AG04450 (cell line): ENCODE measurements at regions of chr17 and their contacts with region 1.

Region 1: DNA sequence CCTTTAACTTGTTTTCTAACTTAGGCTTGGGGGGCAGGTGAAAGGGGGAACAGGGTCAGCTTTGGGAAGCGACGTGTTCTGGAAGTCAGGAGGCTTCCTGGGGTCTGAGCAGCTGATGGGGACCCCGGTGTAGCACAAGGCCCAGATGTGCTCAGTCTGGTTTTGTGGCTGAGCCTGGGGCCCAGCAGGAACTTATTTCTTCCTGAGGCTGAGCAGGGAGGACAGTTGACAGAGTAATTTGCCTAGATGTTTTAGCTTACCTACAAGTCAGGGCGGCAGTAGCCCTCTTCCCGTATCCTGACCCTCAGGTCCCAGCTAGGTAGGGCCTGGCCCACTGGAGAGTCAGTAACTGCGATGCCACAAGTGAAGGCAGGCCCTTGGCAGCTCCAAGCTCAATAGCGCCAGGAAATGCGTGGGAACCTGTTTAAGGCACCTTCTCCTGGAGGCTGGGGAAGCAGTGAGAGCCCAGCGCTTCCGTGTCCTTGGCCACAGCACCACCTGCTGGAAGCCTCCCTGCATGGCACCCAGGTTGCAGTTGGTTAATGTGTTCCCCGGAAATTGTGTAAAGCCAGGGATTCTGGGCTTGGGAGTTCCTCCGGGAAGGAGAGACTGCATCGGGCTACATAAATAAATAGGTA is 5.2 kb downstream of the CCR7 start:
- DNase-seq: peak; percentile 89
- H3K4me3 ChIP-seq: no peak overlapping the region
- H3K27ac ChIP-seq: peak overlapping the region; percentile 77
- H3K27me3 ChIP-seq: peaks cover 19% of the 10 kb centered on the region
- CTCF ChIP-seq: peak; percentile 99

Region 2: GRCh38 chr17:40362696-40363110 is 197.4 kb before region 1 on chr17:
- CTCF ChIA-PET with region 1: interaction called, 25 read pairs
- POLR2A ChIA-PET with region 1: no interaction called
- DNase-seq: no peak
- H3K4me3 ChIP-seq: peak overlapping the region; percentile 59
- H3K27ac ChIP-seq: no peak overlapping the region
- H3K27me3 ChIP-seq: no peaks in the 10 kb centered on the region
- CTCF ChIP-seq: peak; percentile 70

Region 3: DNA sequence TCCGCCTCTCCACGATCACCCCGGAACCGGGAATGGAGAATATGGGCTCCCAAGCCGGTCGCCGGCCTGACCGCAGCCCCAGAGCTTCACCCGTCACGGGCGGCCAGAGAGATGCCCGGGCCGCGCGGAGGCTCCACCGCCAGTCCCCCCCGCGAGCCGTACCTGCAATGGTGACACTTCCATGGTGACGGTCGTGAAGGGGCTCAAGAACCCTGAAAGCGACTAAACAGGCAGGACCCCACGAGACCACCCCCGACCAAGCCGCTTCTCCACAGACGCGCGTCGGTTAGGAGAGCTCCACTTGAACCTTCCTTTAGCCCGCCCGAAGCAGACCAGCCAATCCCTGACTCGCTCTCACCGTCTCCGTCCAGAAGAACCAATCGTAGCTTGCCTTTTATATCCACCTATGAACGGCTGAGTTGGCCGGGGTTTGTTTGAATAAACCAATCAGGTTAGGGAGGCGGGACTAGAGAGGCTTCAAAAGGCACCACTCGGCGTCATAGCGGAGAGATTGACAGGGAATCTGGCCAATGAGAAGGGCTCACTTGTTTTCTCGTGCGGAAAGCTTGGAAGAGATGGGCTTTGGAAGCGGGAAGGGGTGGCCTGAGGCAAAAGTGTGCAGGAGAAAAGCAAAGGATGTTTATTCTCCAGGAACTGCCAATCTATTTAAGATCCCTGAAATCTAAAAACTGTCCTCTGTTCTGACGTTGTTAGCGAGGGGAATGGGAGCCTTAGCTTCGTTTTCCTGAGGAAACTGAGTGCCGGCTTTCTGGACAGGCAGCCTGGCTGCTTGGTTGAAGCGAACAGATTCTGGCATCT is 142.3 kb before region 1 on chr17 and contains the start of gene TOP2A:
- CTCF ChIA-PET with region 1: interaction called, 37 read pairs
- POLR2A ChIA-PET with region 1: interaction called, 3 read pairs
- DNase-seq: peak; percentile 100
- H3K4me3 ChIP-seq: peak within 1 kb of the TSS; percentile 82
- H3K27ac ChIP-seq: peak within 1 kb of the TSS; percentile 31
- H3K27me3 ChIP-seq: no peaks in the 10 kb centered on the region
- CTCF ChIP-seq: no peak
- polyA plus RNA-seq, gene TOP2A: 28.2 and 53.5 TPM in 2 replicates

Region 4: GRCh38 chr17:40450175-40450574 is 109.9 kb before region 1 on chr17:
- CTCF ChIA-PET with region 1: interaction called, 10 read pairs
- POLR2A ChIA-PET with region 1: interaction called, 4 read pairs
- DNase-seq: no peak
- H3K4me3 ChIP-seq: peak overlapping the region; percentile 22; the same call in 1 of the 2 replicates
- H3K27ac ChIP-seq: peak overlapping the region; percentile 85
- H3K27me3 ChIP-seq: no peaks in the 10 kb centered on the region
- CTCF ChIP-seq: peak; percentile 57

Region 5: GRCh38 chr17:40516581-40517285 is 43.3 kb before region 1 on chr17:
- CTCF ChIA-PET with region 1: no interaction called
- POLR2A ChIA-PET with region 1: no interaction called
- DNase-seq: no peak
- H3K4me3 ChIP-seq: no peak overlapping the region
- H3K27ac ChIP-seq: no peak overlapping the region
- H3K27me3 ChIP-seq: no peaks in the 10 kb centered on the region
- CTCF ChIP-seq: no peak

Region 6: GRCh38 chr17:40542558-40543411 is 17.3 kb before region 1 on chr17:
- CTCF ChIA-PET with region 1: interaction called, 174 read pairs
- POLR2A ChIA-PET with region 1: interaction called, 5 read pairs
- DNase-seq: peak; percentile 92
- H3K4me3 ChIP-seq: no peak overlapping the region
- H3K27ac ChIP-seq: peak overlapping the region; percentile 99
- H3K27me3 ChIP-seq: no peaks in the 10 kb centered on the region
- CTCF ChIP-seq: no peak